HEK293 (cell line): ENCODE measurements at regions of chr1 and their contacts with region 1.

Region 1: DNA sequence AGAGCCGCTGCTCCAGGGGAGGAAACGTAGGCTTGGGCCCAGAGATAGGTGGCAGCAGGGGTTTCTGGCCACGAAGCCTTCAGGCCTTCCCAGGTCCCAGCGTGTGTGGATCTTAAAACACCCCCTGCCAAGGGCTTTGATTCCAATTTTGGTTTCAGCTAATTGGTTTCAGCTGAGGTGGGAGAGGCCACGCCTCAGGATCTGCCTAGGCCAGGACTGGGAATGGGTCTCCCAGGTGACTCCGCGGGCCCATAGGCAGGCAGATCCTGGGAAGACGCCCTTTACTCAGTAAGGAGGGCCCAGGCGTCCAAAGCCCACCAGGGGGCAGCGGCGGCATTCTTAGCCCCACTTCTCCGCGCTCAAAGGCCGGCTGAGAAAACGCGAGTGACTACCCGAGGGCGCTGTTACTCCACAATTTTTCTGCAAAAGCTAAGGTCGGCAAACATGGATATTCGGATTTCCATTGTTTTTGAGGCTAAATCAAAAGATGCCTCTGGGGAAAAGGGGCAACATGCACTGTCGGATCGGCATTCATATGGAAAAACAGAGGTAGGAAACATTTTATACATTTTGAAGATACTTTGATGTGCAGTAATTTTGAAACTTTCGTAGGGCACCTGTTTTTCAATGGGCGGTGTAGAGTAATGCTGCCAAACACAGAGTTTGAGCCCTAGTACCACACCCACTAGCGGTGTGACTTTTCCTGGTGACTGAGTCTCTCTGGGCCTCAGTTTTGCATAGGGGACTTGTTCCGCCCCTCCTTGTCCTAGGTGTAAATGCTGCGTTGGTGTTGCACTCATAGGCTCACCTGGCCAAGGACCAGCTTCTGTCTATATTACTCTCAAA is 31.8 kb upstream of the BCL10 start:
- H3K4me3 ChIP-seq: no peak overlapping the region
- H3K27ac ChIP-seq: no peak overlapping the region
- H3K4me1 ChIP-seq: 0 out of 2 replicates have a peak, but pooled peaks cover 3% of the 10 kb centered on the region
- CTCF ChIP-seq: peak; percentile 97

Region 2: DNA sequence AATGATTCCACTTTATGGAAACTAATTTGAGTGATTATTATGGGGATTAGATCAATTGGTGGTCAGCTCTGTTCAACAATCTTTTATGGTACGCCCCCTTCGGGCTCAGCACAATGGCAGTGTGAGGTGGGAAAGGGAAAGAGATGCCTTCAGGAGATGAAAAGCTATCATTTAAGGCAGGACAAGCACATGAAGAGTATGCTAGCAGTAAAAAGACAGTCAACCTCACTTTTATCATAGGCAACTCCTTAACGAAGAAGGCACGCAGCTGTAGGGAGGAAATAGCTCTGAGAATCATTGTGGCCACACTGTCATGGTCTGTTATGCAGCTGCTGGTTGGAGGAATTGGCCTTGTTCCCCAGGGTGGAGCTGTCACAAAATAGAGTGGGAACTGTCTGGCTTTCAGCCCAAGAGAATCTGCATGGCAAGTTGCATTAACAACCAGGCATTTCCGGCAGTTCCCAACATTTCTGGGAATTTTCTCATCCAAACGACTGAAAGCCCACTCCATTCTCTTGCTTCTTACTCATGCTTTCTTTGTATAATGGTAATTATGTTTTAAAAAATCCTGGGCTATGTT is 22.6 kb after region 1 on chr1:
- CTCF ChIA-PET with region 1: interaction called, 13 read pairs
- POLR2A ChIA-PET with region 1: no interaction called
- H3K4me3 ChIP-seq: no peak overlapping the region
- H3K27ac ChIP-seq: no peak overlapping the region
- H3K4me1 ChIP-seq: no peaks in the 10 kb centered on the region
- CTCF ChIP-seq: no peak

Region 3: GRCh38 chr1:85406887-85407533 is 98.8 kb after region 1 on chr1:
- CTCF ChIA-PET with region 1: interaction called, 10 read pairs
- POLR2A ChIA-PET with region 1: no interaction called
- H3K4me3 ChIP-seq: no peak overlapping the region
- H3K27ac ChIP-seq: no peak overlapping the region
- H3K4me1 ChIP-seq: no peaks in the 10 kb centered on the region
- CTCF ChIP-seq: no peak

Region 4: DNA sequence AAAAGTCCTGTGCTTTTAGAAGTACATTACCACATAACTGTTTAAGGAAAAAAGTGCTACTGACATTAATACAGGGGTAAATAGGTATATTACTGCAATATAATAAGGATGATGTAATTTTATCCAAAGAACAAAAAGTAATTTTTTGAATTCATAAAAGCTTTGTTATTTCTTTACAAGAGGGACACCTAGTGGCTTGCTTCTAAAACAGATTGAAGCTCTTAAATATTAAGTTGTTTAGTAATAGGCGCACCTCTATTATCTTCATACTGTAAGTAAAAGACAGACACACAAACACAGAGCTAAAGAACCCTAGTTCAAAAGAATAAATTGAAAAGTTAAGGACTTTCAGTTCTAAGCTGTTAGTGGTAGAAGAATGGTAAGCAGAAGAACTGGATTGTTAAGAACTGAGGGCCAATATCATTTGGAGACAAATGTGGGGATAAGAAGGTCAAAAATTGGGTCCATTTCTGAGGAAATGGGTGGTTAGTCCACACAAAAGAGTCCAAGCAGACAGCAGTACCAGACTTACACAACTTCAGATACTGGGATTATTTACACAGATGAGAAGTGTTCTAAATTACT is 384.6 kb after region 1 on chr1:
- CTCF ChIA-PET with region 1: interaction called, 48 read pairs
- POLR2A ChIA-PET with region 1: no interaction called
- H3K4me3 ChIP-seq: no peak overlapping the region
- H3K27ac ChIP-seq: no peak overlapping the region
- H3K4me1 ChIP-seq: no peaks in the 10 kb centered on the region
- CTCF ChIP-seq: 0 out of 2 replicates have a peak, but pooled peaks have one; percentile 8

Region 5: GRCh38 chr1:86289161-86289560 is 981.0 kb after region 1 on chr1:
- CTCF ChIA-PET with region 1: no interaction called
- POLR2A ChIA-PET with region 1: no interaction called
- H3K4me3 ChIP-seq: no peak overlapping the region
- H3K27ac ChIP-seq: no peak overlapping the region
- H3K4me1 ChIP-seq: no peaks in the 10 kb centered on the region
- CTCF ChIP-seq: no peak